ENCODE measurements at regions of chr5 and their contacts with region 1.

Region 1: GRCh38 chr5:107359033-107359915 is 311.5 kb downstream of the EFNA5 start:
- H3K4me3 Mint-ChIP-seq: no peak overlapping the region
- H3K27ac Mint-ChIP-seq: peak overlapping the region; percentile 73
- H3K4me1 Mint-ChIP-seq: peaks cover 17% of the 10 kb centered on the region
- H3K27me3 Mint-ChIP-seq: peaks cover under 1% of the 10 kb centered on the region

Region 2: DNA sequence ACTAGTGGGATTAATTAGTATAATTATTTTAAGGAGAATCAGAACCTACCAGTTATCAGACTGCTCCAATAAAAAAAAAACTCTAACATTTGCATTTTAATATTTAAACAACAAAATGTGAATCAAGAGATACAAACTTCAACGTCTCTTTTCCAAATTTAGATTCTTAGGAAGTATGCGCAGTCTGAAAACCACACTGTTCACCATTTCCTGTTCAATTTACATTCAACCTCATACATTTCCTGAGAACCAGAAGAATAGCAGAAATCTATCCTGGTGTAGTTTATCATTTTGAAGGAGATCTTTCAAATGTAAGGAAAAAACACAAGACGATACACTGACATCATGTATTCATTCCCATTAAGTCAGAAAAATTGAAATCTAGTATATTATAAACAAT is 557.7 kb before region 1 on chr5:
- intact Hi-C with region 1: no loop called
- H3K4me3 Mint-ChIP-seq: no peak overlapping the region
- H3K27ac Mint-ChIP-seq: no peak overlapping the region
- H3K4me1 Mint-ChIP-seq: no peaks in the 10 kb centered on the region
- H3K27me3 Mint-ChIP-seq: no peaks in the 10 kb centered on the region

Region 3: GRCh38 chr5:107296572-107296971 is 62.7 kb before region 1 on chr5:
- intact Hi-C with region 1: loop called (anchors 5 kb)
- H3K4me3 Mint-ChIP-seq: no peak overlapping the region
- H3K27ac Mint-ChIP-seq: no peak overlapping the region
- H3K4me1 Mint-ChIP-seq: peaks cover 15% of the 10 kb centered on the region
- H3K27me3 Mint-ChIP-seq: peaks cover 36% of the 10 kb centered on the region

Measured in dendritic cell treated with granulocyte-macrophage colony-stimulating factor and Interleukin-4, amounts not matched to agents 40 ng/mL and 50 ng/mL, for 4 days (primary cell).